ENCODE measurements at regions of chr4 and their contacts with region 1.

Region 1: DNA sequence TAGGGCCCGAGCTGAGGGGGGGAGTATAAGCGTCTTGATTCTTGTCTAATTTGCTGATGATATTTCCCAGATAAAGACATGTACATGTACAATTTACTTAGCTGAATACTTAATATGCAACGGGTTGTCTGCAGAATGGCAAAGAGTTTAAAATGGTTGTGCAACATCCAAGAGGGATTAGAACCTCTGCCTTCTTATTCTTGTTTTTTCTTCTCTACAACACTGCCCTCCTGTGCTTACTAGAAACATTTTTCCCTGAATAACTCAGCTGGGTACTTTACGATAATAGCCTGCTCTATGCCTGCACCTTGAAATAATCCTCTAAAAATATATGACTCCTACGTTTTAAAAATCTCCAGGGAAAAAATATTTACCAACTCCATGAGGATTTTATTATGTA is 41.8 kb downstream of the INTS12 start:
- DNase-seq: peak in 2 of 4 experiments; percentile 7 to 9
- ATAC-seq: peak; percentile 87
- H3K4me3 ChIP-seq: no peak overlapping the region
- H3K27ac ChIP-seq: no peak overlapping the region
- H3K4me1 ChIP-seq: no peaks in the 10 kb centered on the region
- H3K27me3 ChIP-seq: no peaks in the 10 kb centered on the region; a peak in 1 of 5 replicates
- CTCF ChIP-seq: peak; percentile 4 to 40 (median 30); a peak in 3 of 6 replicates
- EP300 ChIP-seq: no peak
- POLR2A ChIP-seq: no peak
- RAD21 ChIP-seq: peak; percentile 42 to 54

Region 2: DNA sequence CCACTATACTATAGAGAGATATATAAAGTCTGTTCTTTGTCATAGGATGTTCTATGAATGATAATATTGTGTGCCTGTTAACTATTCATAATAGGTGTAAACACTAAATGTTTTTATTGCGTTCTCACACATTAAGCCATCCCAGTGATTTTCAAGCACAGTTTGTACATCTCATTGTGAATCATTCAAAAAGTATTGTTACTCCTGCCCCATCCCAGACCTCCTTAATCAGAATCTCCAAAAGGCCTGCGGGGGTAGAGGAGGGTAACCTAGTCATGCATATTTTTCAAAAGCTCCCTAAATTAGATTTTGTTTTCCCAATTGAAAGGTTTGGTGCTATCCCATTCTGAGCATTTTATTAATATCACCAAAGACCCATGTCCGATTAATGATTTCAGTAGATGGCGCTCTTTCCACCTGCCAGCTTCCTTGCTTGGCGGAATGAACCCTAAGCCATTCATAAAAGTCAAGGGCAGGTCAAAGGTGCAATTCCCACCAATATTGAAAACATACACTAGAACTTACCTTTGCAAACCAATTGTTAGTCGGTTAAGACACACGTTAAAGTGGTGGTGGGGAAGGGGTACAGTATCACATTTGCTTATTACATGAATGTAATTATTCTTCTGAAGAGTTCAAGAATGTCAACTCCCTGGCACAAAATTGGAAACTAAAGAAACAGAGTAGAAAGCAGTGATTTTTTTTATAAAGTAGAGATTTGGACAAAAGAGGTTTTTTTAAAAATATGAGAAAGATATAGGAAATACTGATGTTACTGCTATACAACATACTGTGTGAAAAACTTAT is 525.8 kb before region 1 on chr4:
- CTCF ChIA-PET with region 1: no interaction called
- POLR2A ChIA-PET with region 1: no interaction called
- in situ Hi-C with region 1: no loop called
- intact Hi-C with region 1: loop called (anchors 2 kb)
- DNase-seq: peak in 3 of 4 experiments; percentile 12 to 66 (median 48)
- ATAC-seq: peak; percentile 87
- H3K4me3 ChIP-seq: no peak overlapping the region
- H3K27ac ChIP-seq: no peak overlapping the region
- H3K4me1 ChIP-seq: peaks cover 0 to 2% of the 10 kb centered on the region in 2 experiments; a peak in 3 of 5 replicates
- H3K27me3 ChIP-seq: no peaks in the 10 kb centered on the region; a peak in 1 of 5 replicates
- CTCF ChIP-seq: peak; percentile 60 to 81 (median 65)
- EP300 ChIP-seq: no peak
- POLR2A ChIP-seq: no peak
- RAD21 ChIP-seq: peak; percentile 59 to 68

Measured in K562 (cell line).